ENCODE measurements at regions of chr15 and their contacts with region 1.

Region 1: DNA sequence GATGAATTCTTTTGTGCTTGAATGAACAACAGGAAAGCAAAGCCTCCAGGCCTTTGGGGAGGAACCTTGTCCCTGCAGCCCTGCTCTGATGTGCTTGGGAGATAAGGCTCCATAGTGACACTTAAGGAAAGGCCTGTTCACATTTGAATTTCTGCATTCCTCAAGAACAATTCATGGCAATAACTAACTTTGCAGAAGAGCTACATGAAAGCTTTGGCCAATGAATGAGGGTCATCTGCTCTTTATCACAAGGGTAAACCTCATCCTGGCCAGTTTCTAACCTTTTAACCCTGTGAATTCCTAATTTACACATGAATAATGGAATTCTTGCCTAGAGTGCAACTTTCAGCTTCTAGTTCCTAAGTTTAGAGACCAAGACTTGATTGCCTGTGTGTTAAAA is 5.6 kb downstream of the PRTG start:
- DNase-seq: no peak
- ATAC-seq: no peak
- H3K4me3 ChIP-seq: no peak overlapping the region
- H3K4me3 Mint-ChIP-seq: no peak overlapping the region
- H3K27ac ChIP-seq: no peak overlapping the region
- H3K27ac Mint-ChIP-seq: no peak overlapping the region
- H3K4me1 ChIP-seq: peaks cover 7% of the 10 kb centered on the region
- H3K4me1 Mint-ChIP-seq: no peaks in the 10 kb centered on the region
- H3K27me3 ChIP-seq: peaks cover 7 to 13% of the 10 kb centered on the region in 2 experiments
- H3K27me3 Mint-ChIP-seq: peaks cover 28% of the 10 kb centered on the region
- CTCF ChIP-seq: no peak

Region 2: GRCh38 chr15:55661428-55661827 is 75.9 kb before region 1 on chr15:
- CTCF ChIA-PET with region 1: no interaction called
- POLR2A ChIA-PET with region 1: no interaction called
- intact Hi-C with region 1: no loop called
- DNase-seq: no peak
- ATAC-seq: no peak
- H3K4me3 ChIP-seq: no peak overlapping the region
- H3K4me3 Mint-ChIP-seq: no peak overlapping the region
- H3K27ac ChIP-seq: no peak overlapping the region
- H3K27ac Mint-ChIP-seq: no peak overlapping the region
- H3K4me1 ChIP-seq: no peaks in the 10 kb centered on the region
- H3K4me1 Mint-ChIP-seq: no peaks in the 10 kb centered on the region
- H3K27me3 ChIP-seq: no peaks in the 10 kb centered on the region
- H3K27me3 Mint-ChIP-seq: no peaks in the 10 kb centered on the region
- CTCF ChIP-seq: no peak

Region 3: DNA sequence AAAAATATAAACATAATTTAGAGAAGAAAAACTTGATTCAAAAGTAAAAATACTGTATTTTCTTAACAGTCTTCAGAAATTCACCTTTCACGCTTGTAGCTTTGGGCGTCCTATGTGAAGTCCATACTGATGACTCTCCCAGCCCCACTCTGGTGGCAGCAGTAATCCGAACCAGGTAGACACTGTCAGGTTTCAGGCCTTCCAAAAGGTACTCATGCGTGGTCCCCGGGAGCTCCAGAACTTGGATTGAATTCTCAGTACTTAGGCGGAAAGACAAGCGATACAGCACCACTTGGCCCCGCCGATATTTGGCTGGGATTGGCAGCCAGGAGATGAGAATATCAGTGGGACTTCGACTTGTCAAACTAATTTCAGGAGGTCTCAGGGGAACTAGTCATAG is 64.1 kb before region 1 on chr15:
- CTCF ChIA-PET with region 1: no interaction called
- POLR2A ChIA-PET with region 1: no interaction called
- intact Hi-C with region 1: loop called in 1 of 2 experiments (anchors 10 kb)
- DNase-seq: no peak
- ATAC-seq: no peak
- H3K4me3 ChIP-seq: no peak overlapping the region
- H3K4me3 Mint-ChIP-seq: no peak overlapping the region
- H3K27ac ChIP-seq: no peak overlapping the region
- H3K27ac Mint-ChIP-seq: no peak overlapping the region
- H3K4me1 ChIP-seq: no peaks in the 10 kb centered on the region
- H3K4me1 Mint-ChIP-seq: no peaks in the 10 kb centered on the region
- H3K27me3 ChIP-seq: no peaks in the 10 kb centered on the region
- H3K27me3 Mint-ChIP-seq: peaks cover 5% of the 10 kb centered on the region
- CTCF ChIP-seq: no peak

Region 4: DNA sequence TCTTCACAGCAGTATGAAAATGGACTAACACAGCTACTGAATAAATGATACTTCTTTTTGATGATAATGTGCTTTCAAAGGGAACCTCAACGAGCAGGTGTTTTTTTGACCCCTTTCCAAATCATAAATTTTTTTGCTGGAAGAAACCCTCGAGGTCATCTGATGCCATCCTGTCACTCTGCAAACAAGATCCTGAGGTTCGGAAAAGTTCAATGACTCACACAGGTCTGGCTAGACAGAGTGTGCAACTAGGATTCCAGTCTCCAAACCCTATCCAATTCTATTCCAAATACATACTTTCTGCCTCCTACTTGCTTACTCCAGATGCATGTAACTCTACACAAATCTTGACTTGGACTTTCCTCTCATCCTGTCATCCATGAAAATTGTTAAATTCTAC is 131.3 kb after region 1 on chr15:
- CTCF ChIA-PET with region 1: no interaction called
- POLR2A ChIA-PET with region 1: no interaction called
- intact Hi-C with region 1: no loop called
- DNase-seq: no peak
- ATAC-seq: no peak
- H3K4me3 ChIP-seq: no peak overlapping the region
- H3K4me3 Mint-ChIP-seq: no peak overlapping the region
- H3K27ac ChIP-seq: no peak overlapping the region
- H3K27ac Mint-ChIP-seq: no peak overlapping the region
- H3K4me1 ChIP-seq: no peaks in the 10 kb centered on the region
- H3K4me1 Mint-ChIP-seq: no peaks in the 10 kb centered on the region
- H3K27me3 ChIP-seq: no peaks in the 10 kb centered on the region
- H3K27me3 Mint-ChIP-seq: no peaks in the 10 kb centered on the region
- CTCF ChIP-seq: no peak

Region 5: GRCh38 chr15:55937040-55937439 is 199.7 kb after region 1 on chr15:
- CTCF ChIA-PET with region 1: no interaction called
- POLR2A ChIA-PET with region 1: no interaction called
- intact Hi-C with region 1: no loop called
- DNase-seq: peak in 2 of 9 experiments; percentile 5 to 47
- ATAC-seq: no peak
- H3K4me3 ChIP-seq: no peak overlapping the region
- H3K4me3 Mint-ChIP-seq: no peak overlapping the region
- H3K27ac ChIP-seq: no peak overlapping the region
- H3K27ac Mint-ChIP-seq: no peak overlapping the region
- H3K4me1 ChIP-seq: peaks cover 5% of the 10 kb centered on the region
- H3K4me1 Mint-ChIP-seq: no peaks in the 10 kb centered on the region
- H3K27me3 ChIP-seq: no peaks in the 10 kb centered on the region
- H3K27me3 Mint-ChIP-seq: no peaks in the 10 kb centered on the region
- CTCF ChIP-seq: no peak

Region 6: GRCh38 chr15:55954862-55955605 is 217.7 kb after region 1 on chr15:
- CTCF ChIA-PET with region 1: no interaction called
- POLR2A ChIA-PET with region 1: no interaction called
- intact Hi-C with region 1: no loop called
- DNase-seq: no peak
- ATAC-seq: no peak
- H3K4me3 ChIP-seq: no peak overlapping the region
- H3K4me3 Mint-ChIP-seq: no peak overlapping the region
- H3K27ac ChIP-seq: no peak overlapping the region
- H3K27ac Mint-ChIP-seq: no peak overlapping the region
- H3K4me1 ChIP-seq: no peaks in the 10 kb centered on the region
- H3K4me1 Mint-ChIP-seq: no peaks in the 10 kb centered on the region
- H3K27me3 ChIP-seq: no peaks in the 10 kb centered on the region
- H3K27me3 Mint-ChIP-seq: no peaks in the 10 kb centered on the region
- CTCF ChIP-seq: no peak

Measured in CD8-positive, alpha-beta T cell (primary cell).